Dendritic cell treated with granulocyte-macrophage colony-stimulating factor and Interleukin-4, amounts not matched to agents 40 ng/mL and 50 ng/mL, for 4 days (primary cell): ENCODE measurements at regions of chr22 and their contacts with region 1.

Region 1: GRCh38 chr22:30196141-30196879 is 50.2 kb downstream of the LIF start:
- H3K4me3 Mint-ChIP-seq: no peak overlapping the region
- H3K27ac Mint-ChIP-seq: no peak overlapping the region
- H3K4me1 Mint-ChIP-seq: peaks cover 53% of the 10 kb centered on the region
- H3K27me3 Mint-ChIP-seq: no peaks in the 10 kb centered on the region

Region 2: DNA sequence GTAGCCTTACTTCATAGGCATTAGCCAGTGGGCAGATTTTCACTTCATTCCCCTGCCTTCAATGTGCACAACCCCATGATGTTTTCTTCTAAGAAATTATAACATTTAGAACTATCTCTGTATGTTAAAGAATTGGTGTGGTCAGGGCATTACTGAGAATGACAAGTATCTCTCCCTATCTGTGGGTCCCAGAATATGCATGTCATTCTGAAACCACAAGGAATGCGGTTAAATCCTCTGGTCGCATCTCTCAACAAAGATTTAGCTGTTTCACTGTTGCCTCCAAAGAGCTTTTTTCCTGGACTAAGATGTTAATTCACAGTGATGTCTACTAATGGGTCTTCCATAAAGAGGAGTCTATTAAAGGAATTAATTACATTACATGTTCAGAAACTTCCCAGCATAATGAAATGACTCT is 12.4 kb before region 1 on chr22:
- intact Hi-C with region 1: loop called (anchors 2 kb)
- H3K4me3 Mint-ChIP-seq: no peak overlapping the region
- H3K27ac Mint-ChIP-seq: no peak overlapping the region
- H3K4me1 Mint-ChIP-seq: no peaks in the 10 kb centered on the region
- H3K27me3 Mint-ChIP-seq: peaks cover 5% of the 10 kb centered on the region

Region 3: DNA sequence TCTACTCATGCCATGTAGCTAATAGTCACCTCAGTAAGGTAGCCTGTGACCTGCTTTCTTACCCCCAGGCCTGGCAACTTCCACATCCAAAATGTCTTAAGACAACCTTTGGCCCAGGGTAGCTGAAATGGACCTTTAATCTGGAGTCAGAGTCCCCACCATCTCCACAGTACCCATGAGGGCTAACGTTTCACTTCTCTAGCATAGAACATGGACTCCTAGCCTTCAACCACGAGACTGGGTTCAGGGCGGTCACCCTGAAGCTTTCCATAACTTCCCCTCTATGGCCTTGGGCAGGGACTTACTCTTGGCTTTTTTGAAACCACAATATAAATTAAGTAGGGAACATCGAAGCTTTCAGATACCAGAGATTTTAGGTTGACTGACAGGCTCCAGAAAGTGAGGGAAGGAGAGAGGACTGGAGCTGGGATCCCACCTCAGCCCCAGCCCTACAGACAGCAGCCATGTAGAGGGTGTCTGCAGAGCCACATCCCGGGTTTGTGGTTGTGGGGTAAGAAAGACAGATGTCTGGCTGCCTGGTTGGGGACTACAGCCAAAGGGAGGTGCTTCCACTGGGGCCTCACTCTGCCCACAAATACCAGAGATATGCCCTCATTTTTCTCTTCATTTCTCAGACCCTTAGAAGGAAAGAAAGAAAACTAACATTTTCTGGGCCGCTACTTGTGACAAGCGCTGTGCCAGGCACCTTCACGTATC is 127.9 kb after region 1 on chr22:
- intact Hi-C with region 1: no loop called
- H3K4me3 Mint-ChIP-seq: peak overlapping the region; percentile 86
- H3K27ac Mint-ChIP-seq: peak overlapping the region; percentile 85
- H3K4me1 Mint-ChIP-seq: peaks cover 75% of the 10 kb centered on the region
- H3K27me3 Mint-ChIP-seq: no peaks in the 10 kb centered on the region